ENCODE measurements at regions of chr19 and their contacts with region 1.

Region 1: DNA sequence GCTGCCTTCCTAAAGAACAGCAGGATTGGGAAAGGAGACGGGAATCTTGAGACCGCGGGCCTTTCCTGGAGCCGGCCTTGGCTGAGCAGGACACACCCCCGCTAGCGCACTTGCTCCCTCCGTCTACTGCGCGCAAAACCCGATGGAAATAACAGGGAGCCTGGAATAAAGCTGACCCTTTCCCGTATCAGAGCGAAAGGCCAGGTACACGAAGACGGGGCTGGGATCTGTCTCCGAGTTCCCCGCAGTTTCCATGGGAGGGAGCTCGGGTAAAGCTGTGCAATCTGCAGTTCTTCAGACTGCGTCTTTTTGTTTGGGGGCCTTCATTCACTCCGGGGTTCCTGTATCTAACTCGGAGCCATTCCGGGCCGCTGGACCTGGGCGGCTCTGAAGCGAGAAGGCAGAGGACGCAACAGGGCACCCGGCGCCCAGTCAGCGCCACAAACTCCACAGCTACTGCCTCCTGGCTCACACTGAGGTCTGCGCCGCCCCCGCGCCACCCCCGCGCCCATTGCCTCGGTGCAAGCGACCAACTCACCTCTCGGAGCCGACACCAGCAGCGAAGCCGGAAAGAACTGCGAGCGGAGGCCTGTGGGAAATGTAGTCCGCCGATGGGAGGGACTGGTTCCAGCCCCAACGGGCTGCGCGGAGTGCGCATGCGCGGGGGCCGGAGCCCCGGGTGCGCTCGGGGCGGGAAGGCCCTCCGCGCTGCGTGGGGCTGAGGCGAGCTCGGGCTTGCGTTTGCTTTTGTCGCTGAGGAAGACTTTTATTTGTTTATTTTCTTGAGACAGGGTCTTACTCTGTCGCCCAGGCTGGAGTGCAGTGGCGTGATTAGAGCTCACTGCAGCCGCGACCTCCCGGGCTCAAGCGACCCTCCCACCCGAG is at the start of gene ZFP14:
- DNase-seq: peak; percentile 96
- H3K4me3 Mint-ChIP-seq: peak within 1 kb of the TSS; percentile 90
- H3K27ac Mint-ChIP-seq: peak within 1 kb of the TSS; percentile 84
- H3K4me1 Mint-ChIP-seq: peaks cover 10% of the 10 kb centered on the region
- H3K27me3 Mint-ChIP-seq: no peaks in the 10 kb centered on the region
- total RNA-seq, gene ZFP14: 2.2 to 3.1 TPM

Region 2: GRCh38 chr19:36132489-36132891 is 246.4 kb before region 1 on chr19:
- CTCF ChIA-PET with region 1: no interaction called
- intact Hi-C with region 1: loop called (anchors 2 kb)
- DNase-seq: peak; percentile 61
- H3K4me3 Mint-ChIP-seq: no peak overlapping the region
- H3K27ac Mint-ChIP-seq: peak overlapping the region; percentile 18
- H3K4me1 Mint-ChIP-seq: peaks cover 32% of the 10 kb centered on the region
- H3K27me3 Mint-ChIP-seq: no peaks in the 10 kb centered on the region

Region 3: DNA sequence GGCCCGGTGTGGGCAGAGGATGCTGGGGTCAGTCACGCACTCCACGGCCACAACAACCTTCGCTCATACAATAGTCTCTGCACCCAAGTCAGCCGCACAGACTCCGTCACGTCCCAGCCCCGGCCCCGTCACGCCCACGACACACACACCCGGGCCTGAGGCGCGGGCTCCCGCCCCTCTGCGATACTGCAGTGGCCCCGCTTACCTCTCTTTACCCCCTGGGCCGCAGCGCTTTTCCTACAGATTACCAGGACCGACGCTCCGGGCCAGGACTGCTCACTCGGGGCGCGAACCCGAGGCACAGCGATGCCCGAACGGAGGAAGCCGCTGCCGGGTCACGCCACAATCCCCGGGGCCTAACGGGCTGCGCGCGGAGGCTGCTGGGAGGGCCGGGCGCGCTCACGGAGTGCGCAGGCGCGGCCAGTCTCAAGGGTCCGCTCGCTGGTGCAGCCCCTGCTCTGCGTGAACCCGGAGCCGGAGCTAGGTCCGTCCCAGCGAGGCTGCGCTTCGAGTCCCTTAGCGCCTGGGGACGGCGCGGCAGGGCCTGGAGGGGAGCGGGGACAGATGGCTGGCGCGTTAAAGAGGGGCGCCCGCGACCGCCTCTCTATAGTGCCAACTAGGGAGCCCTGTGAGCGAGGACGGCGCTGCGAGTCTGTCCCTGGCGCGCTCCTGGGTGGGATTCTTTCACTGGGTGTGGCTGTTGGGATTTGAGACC is 39.6 kb after region 1 on chr19 and contains the start of gene ZFP82:
- CTCF ChIA-PET with region 1: no interaction called
- intact Hi-C with region 1: loop called (anchors 2 kb)
- DNase-seq: peak; percentile 81
- H3K4me3 Mint-ChIP-seq: peak within 1 kb of the TSS; percentile 92
- H3K27ac Mint-ChIP-seq: peak within 1 kb of the TSS; percentile 92
- H3K4me1 Mint-ChIP-seq: peaks cover 19% of the 10 kb centered on the region
- H3K27me3 Mint-ChIP-seq: peaks cover 18% of the 10 kb centered on the region
- total RNA-seq, gene ZFP82: 2.4 to 2.6 TPM

Region 4: GRCh38 chr19:36508325-36508724 is 129.5 kb after region 1 on chr19:
- CTCF ChIA-PET with region 1: no interaction called
- intact Hi-C with region 1: no loop called
- DNase-seq: no peak
- H3K4me3 Mint-ChIP-seq: no peak overlapping the region
- H3K27ac Mint-ChIP-seq: no peak overlapping the region
- H3K4me1 Mint-ChIP-seq: no peaks in the 10 kb centered on the region
- H3K27me3 Mint-ChIP-seq: no peaks in the 10 kb centered on the region

Region 5: GRCh38 chr19:36973021-36973843 is 594.4 kb after region 1 on chr19:
- CTCF ChIA-PET with region 1: no interaction called
- intact Hi-C with region 1: loop called (anchors 1 kb)
- DNase-seq: peak; percentile 91
- H3K4me3 Mint-ChIP-seq: peak overlapping the region; percentile 92
- H3K27ac Mint-ChIP-seq: peak overlapping the region; percentile 95
- H3K4me1 Mint-ChIP-seq: peaks cover 11% of the 10 kb centered on the region
- H3K27me3 Mint-ChIP-seq: no peaks in the 10 kb centered on the region

Measured in activated naive CD4-positive, alpha-beta T cell treated with anti-CD3 and anti-CD28 coated beads for 36 hours (primary cell).